ENCODE measurements at regions of chr12 and their contacts with region 1.

Region 1: DNA sequence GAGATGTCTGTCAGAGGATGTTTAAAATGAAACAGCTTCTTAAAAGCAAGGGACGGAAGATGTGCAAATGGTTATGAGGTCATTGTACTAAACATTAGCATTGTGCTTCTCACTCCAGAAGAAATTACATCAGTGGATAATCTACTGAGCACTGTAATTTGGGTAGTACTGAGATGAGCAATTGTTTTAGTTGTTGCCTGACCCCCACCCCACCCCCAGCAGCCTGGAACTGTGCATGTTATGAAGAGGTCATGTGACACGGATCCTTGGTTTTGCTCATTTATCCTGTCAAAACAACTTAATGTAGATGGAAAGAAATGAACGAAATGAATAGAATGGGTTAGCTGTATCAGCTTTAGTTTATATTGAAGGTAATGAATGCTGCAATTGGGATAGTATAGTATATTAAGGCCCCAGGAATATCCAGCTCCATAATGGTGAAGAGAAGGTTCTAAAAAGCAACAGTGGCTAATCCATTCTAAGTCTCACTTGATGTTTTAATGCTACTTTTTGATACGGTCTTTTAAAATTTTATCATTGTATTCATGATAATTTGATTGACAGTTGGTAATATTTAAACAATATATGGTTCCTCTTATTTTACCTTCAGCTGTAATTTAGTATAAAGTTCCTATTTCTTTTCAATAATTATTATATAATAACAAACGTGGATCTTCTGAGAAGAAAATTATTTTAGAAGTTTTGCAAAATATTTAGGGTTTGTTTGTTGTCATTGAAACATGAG is 58.5 kb downstream of the WNK1 start:
- DNase-seq: no peak
- H3K4me3 ChIP-seq: peak overlapping the region in 1 of 2 donors; percentile 9
- H3K4me3 Mint-ChIP-seq: peak overlapping the region in 7 of 8 donors; percentile 21 to 76 (median 62)
- H3K27ac ChIP-seq: peak overlapping the region; percentile 11
- H3K27ac Mint-ChIP-seq: peak overlapping the region; percentile 14 to 86 (median 78)
- H3K4me1 ChIP-seq: peaks cover 86% of the 10 kb centered on the region
- H3K4me1 Mint-ChIP-seq: peaks cover 50 to 81% (median 66%) of the 10 kb centered on the region in 4 donors
- H3K27me3 ChIP-seq: no peaks in the 10 kb centered on the region
- H3K27me3 Mint-ChIP-seq: no peaks in the 10 kb centered on the region

Region 2: DNA sequence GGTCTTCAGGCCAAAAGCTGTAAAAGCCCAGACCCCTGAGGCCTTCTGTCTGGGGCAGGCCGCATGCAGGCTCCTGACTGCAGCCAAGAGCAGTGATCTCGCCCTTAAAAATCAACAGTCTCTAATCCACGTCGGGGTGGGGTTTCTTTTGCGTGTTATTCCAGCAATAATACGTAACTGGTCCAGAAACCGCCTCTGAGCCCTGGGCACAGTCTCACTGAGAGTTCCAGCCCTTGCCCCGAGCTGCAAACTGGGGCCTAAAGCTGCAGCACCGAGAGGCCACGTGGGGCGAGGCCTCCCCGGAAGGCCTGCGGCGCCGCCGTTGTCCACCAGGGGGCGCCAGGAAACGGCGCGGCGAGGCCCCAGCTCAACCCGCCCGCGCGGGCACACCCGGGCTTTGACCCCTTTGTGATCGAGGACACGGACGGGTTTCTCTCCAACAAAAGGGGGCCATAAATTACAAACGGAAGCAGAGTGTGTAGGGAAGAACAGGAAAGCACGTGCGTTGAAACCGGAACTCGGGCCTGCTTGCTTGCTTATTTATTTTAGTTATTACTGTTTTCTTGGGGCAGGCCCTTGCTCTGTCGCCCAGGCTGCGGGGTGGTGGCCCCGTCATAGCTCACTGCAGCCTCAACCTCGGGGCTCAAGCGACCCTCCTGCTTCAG is 234.8 kb before region 1 on chr12:
- CTCF ChIA-PET with region 1: interaction called, 219 read pairs
- POLR2A ChIA-PET with region 1: interaction called, 13 read pairs
- intact Hi-C with region 1: loop called (anchors 1 kb)
- DNase-seq: peak; percentile 71 to 89 (median 82)
- H3K4me3 ChIP-seq: peak overlapping the region in 1 of 2 donors; percentile 38
- H3K4me3 Mint-ChIP-seq: peak overlapping the region in 7 of 8 donors; percentile 12 to 74 (median 68)
- H3K27ac ChIP-seq: no peak overlapping the region
- H3K27ac Mint-ChIP-seq: peak overlapping the region in 6 of 7 donors; percentile 65 to 92 (median 79)
- H3K4me1 ChIP-seq: peaks cover 15% of the 10 kb centered on the region
- H3K4me1 Mint-ChIP-seq: peaks cover 6 to 23% (median 14%) of the 10 kb centered on the region in 4 donors
- H3K27me3 ChIP-seq: no peaks in the 10 kb centered on the region
- H3K27me3 Mint-ChIP-seq: no peaks in the 10 kb centered on the region

Region 3: DNA sequence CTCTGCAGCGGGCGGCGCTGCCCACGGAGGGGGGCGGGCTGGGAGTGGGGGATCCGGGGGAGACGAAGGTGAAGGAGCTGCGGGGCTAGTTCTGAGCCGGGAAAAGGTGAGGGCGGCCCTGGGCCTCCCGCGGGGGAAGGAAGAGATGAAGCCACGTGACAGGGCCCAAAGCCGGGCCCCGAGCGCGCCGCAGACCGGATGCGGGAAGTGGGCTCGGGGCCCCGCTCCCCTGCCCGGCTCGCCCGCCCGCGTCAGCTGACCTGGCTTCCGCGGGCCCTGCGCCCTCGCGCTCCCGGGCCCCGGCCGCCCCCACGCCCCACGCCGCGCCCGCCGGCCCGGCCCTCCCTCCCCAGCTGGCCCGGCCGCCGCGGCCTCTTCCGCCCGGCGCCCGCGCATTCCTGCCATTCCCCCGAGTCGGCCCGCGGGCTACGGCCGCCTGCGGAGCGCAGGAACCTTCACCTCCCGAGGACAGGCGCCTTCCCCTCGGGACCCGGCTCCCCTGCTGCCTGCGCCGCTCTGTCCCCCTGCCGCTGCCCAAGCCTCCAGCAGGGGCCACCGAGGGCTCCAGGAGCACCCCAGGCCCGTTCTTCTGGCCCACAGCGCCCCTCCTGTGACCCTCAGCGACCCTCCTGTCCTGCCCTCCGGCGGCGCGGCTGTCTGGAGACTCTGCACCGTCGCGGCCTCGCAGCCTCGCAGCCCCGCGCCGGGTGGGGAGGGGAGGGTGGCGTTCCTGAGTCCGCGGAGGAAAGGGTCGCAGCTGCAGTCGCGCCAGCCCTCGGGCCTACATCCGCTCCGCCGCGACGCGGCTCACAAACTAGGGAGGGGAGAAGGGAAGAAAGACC is 168.0 kb before region 1 on chr12:
- CTCF ChIA-PET with region 1: interaction called, 11 read pairs
- POLR2A ChIA-PET with region 1: interaction called, 4 read pairs
- intact Hi-C with region 1: no loop called
- DNase-seq: peak; percentile 79 to 85 (median 83)
- H3K4me3 ChIP-seq: peak overlapping the region; percentile 25 to 76
- H3K4me3 Mint-ChIP-seq: peak overlapping the region; percentile 90 to 94 (median 91)
- H3K27ac ChIP-seq: peak overlapping the region; percentile 89
- H3K27ac Mint-ChIP-seq: peak overlapping the region; percentile 93 to 99 (median 96)
- H3K4me1 ChIP-seq: peaks cover 63% of the 10 kb centered on the region
- H3K4me1 Mint-ChIP-seq: peaks cover 39 to 71% (median 59%) of the 10 kb centered on the region in 4 donors
- H3K27me3 ChIP-seq: no peaks in the 10 kb centered on the region
- H3K27me3 Mint-ChIP-seq: no peaks in the 10 kb centered on the region

Region 4: GRCh38 chr12:779745-780734 is 30.8 kb before region 1 on chr12:
- CTCF ChIA-PET with region 1: interaction called, 51 read pairs
- POLR2A ChIA-PET with region 1: interaction called, 3 read pairs
- intact Hi-C with region 1: no loop called
- DNase-seq: no peak
- H3K4me3 ChIP-seq: peak overlapping the region in 1 of 2 donors; percentile 16
- H3K4me3 Mint-ChIP-seq: peak overlapping the region; percentile 78 to 94 (median 83)
- H3K27ac ChIP-seq: peak overlapping the region; percentile 16
- H3K27ac Mint-ChIP-seq: peak overlapping the region; percentile 76 to 93 (median 82)
- H3K4me1 ChIP-seq: peaks cover 81% of the 10 kb centered on the region
- H3K4me1 Mint-ChIP-seq: peaks cover 53 to 78% (median 64%) of the 10 kb centered on the region in 4 donors
- H3K27me3 ChIP-seq: no peaks in the 10 kb centered on the region
- H3K27me3 Mint-ChIP-seq: no peaks in the 10 kb centered on the region

Region 5: DNA sequence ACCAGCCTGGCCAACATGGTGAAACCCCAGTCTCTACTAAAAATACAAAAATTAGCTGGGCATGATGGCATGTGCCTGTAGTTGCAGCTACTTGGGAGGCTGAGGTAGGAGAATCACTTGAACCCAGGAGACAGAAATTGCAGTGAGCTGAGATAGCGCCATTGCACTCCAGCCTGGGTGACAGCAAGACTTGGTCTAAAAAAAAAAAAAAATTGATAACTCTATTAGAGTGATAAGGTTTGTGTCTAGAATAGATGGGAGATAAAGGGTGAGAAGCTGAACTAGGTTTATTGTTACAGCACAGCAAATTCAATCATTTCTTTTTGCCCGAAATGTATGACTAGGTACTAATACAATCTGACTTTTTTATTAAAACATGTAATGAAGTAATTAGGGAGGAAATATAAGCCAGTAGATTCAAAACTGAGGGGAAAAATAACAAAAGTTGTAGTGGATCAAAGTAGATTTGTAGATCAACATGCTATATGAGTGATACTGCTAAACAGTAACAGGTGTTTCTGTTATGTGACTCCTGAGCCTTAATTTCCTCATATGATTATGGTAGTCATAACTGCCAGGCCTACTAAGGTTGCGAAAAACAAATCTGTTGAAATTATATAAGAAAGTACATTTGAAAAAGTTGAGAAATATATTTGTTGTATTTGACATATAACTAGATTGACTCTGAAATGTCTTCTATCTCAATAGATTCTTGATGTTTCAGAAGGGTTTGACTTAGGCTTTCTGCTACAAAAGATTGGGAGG is 25.1 kb after region 1 on chr12:
- CTCF ChIA-PET with region 1: interaction called, 23 read pairs
- POLR2A ChIA-PET with region 1: interaction called, 3 read pairs
- intact Hi-C with region 1: no loop called
- DNase-seq: no peak
- H3K4me3 ChIP-seq: no peak overlapping the region
- H3K4me3 Mint-ChIP-seq: no peak overlapping the region
- H3K27ac ChIP-seq: no peak overlapping the region
- H3K27ac Mint-ChIP-seq: peak overlapping the region in 4 of 7 donors; percentile 12 to 77 (median 42)
- H3K4me1 ChIP-seq: no peaks in the 10 kb centered on the region
- H3K4me1 Mint-ChIP-seq: peaks cover 27 to 52% (median 39%) of the 10 kb centered on the region in 4 donors
- H3K27me3 ChIP-seq: no peaks in the 10 kb centered on the region
- H3K27me3 Mint-ChIP-seq: no peaks in the 10 kb centered on the region

Region 6: GRCh38 chr12:1047898-1048660 is 237.2 kb after region 1 on chr12:
- CTCF ChIA-PET with region 1: no interaction called
- POLR2A ChIA-PET with region 1: no interaction called
- intact Hi-C with region 1: no loop called
- DNase-seq: no peak
- H3K4me3 ChIP-seq: no peak overlapping the region
- H3K4me3 Mint-ChIP-seq: no peak overlapping the region
- H3K27ac ChIP-seq: no peak overlapping the region
- H3K27ac Mint-ChIP-seq: peak overlapping the region in 1 of 7 donors; percentile 19
- H3K4me1 ChIP-seq: no peaks in the 10 kb centered on the region
- H3K4me1 Mint-ChIP-seq: peaks cover 0 to 11% (median 6%) of the 10 kb centered on the region in 4 donors
- H3K27me3 ChIP-seq: no peaks in the 10 kb centered on the region
- H3K27me3 Mint-ChIP-seq: no peaks in the 10 kb centered on the region

Region 7: GRCh38 chr12:1594261-1595025 is 783.6 kb after region 1 on chr12 and contains the start of gene FBXL14:
- CTCF ChIA-PET with region 1: interaction called, 3 read pairs
- POLR2A ChIA-PET with region 1: no interaction called
- intact Hi-C with region 1: loop called (anchors 5 kb)
- DNase-seq: peak; percentile 91 to 93 (median 92)
- H3K4me3 ChIP-seq: peak within 1 kb of the TSS; percentile 77 to 95
- H3K4me3 Mint-ChIP-seq: peak within 1 kb of the TSS; percentile 92 to 96 (median 94)
- H3K27ac ChIP-seq: peak within 1 kb of the TSS; percentile 68
- H3K27ac Mint-ChIP-seq: peak within 1 kb of the TSS; percentile 92 to 99 (median 98)
- H3K4me1 ChIP-seq: peaks cover 42% of the 10 kb centered on the region
- H3K4me1 Mint-ChIP-seq: peaks cover 34 to 68% (median 42%) of the 10 kb centered on the region in 4 donors
- H3K27me3 ChIP-seq: no peaks in the 10 kb centered on the region
- H3K27me3 Mint-ChIP-seq: no peaks in the 10 kb centered on the region
- total RNA-seq, gene FBXL14: 41.6 to 43.4 TPM

Measured in CD4-positive, alpha-beta memory T cell (primary cell).